A549 (cell line): ENCODE measurements at regions of chr12 and their contacts with region 1.

Region 1: GRCh38 chr12:111287125-111287900 is 81.6 kb downstream of the PHETA1 start:
- DNase-seq: no peak
- ATAC-seq: no peak
- H3K4me3 ChIP-seq: no peak overlapping the region
- H3K27ac ChIP-seq: no peak overlapping the region
- H3K4me1 ChIP-seq: no peaks in the 10 kb centered on the region
- CTCF ChIP-seq: no peak
- EP300 ChIP-seq: no peak
- POLR2A ChIP-seq: no peak
- RAD21 ChIP-seq: no peak

Region 2: DNA sequence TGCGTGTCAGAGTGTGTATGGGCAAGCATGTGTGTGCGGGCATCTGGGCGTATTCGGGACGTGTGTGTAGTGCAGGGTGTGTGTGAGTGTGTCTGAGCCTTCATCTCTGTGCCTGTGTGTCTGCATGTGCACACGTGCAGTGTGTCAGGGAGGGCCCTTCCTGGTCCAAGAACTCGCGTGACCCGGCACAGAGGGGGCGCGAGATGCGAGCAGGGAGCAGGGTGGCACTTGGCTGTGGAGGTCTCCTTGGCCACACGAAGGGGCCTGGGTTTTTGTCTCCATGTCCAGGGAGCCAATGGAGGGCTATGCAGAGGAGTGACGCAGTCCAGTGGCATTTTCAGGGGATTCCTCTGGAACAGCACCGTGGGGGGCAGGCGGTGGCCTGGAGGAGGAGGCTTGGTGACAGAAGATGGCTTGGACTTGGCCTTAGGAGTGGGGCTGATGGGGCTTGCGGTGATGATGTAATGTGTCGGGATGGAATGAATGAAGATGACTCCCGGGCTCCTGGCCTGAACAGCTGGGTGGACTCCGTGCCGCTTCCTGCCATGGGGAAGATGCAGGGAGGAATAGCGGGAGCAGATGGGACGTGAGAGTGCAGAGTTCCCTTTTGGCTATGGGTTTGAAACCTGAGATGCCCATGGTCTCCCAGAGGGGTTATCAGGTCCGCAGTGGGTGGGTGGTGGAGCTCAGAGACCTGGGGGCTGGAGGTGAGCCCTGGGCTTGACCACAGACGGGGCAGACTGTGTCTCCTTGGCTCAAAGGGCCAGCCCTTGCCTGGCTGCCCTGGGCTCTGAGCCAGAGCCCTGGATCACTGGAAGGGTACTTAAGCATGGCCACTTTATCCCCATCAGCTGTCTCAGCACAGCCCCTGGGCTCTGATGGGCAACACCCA is 126.7 kb before region 1 on chr12:
- CTCF ChIA-PET with region 1: no interaction called
- POLR2A ChIA-PET with region 1: no interaction called
- DNase-seq: no peak
- ATAC-seq: peak in 1 of 2 experiments; percentile 32; a peak in 3 of 6 replicates
- H3K4me3 ChIP-seq: no peak overlapping the region
- H3K27ac ChIP-seq: no peak overlapping the region
- H3K4me1 ChIP-seq: no peaks in the 10 kb centered on the region
- CTCF ChIP-seq: no peak
- EP300 ChIP-seq: no peak
- POLR2A ChIP-seq: no peak
- RAD21 ChIP-seq: no peak

Region 3: GRCh38 chr12:111221062-111222026 is 66.0 kb before region 1 on chr12:
- CTCF ChIA-PET with region 1: no interaction called
- POLR2A ChIA-PET with region 1: no interaction called
- DNase-seq: no peak
- ATAC-seq: no peak
- H3K4me3 ChIP-seq: no peak overlapping the region
- H3K27ac ChIP-seq: no peak overlapping the region
- H3K4me1 ChIP-seq: no peaks in the 10 kb centered on the region
- CTCF ChIP-seq: no peak
- EP300 ChIP-seq: no peak
- POLR2A ChIP-seq: no peak
- RAD21 ChIP-seq: no peak

Region 4: DNA sequence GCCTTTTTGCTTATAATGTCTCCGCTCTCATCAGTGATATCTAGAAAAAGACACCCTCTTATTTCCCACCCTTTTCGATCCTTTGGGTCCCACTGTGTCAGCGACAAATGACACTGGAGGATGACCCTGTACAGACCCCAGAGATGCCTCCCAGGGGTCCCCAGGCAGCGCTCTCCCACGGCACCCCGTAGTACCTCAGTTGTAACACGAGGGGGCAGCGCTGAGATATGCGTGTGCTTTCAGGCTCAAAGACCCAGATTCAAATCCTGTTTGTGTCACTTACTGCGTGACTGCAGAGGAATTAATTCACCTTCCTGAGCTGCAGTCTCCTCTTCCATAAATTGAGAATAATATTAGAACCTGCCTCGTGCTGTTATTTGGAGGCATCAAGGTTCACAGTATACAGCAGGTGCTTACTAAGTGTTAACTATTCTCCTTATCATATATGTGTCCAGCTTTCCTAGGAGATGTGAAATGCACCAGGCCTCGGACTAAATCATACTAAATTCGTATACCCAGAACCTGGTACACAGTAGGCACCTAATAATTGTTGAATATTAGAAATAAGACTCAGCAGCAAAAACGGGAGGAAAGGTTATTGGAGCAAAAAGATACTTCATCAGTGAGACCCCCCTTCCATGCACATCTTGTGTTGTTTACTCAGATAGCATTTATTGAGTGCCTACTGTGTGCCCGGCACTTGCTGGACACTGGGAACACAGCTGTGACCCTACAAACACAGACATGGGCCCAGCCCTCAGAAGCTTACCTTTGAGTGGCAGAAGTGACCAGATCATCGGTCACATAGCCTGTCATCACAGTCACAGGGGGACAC is 18.4 kb before region 1 on chr12:
- CTCF ChIA-PET with region 1: interaction called, 11 read pairs
- POLR2A ChIA-PET with region 1: no interaction called
- DNase-seq: no peak
- ATAC-seq: peak in 1 of 2 experiments; percentile 43; a peak in 2 of 6 replicates
- H3K4me3 ChIP-seq: no peak overlapping the region
- H3K27ac ChIP-seq: no peak overlapping the region
- H3K4me1 ChIP-seq: peaks cover 8% of the 10 kb centered on the region; the same call in 1 of the 3 replicates
- CTCF ChIP-seq: peak; percentile 48
- EP300 ChIP-seq: no peak
- POLR2A ChIP-seq: no peak
- RAD21 ChIP-seq: peak in 1 of 2 experiments; percentile 54; a peak in 3 of 5 replicates